Endothelial cell of umbilical vein (primary cell): ENCODE measurements at regions of chr1 and their contacts with region 1.

Region 1: GRCh38 chr1:174262349-174263241 is 103.3 kb downstream of the RABGAP1L start:
- DNase-seq: peak; percentile 68
- H3K4me3 ChIP-seq: no peak overlapping the region
- H3K27ac ChIP-seq: no peak overlapping the region
- H3K4me1 ChIP-seq: no peaks in the 10 kb centered on the region
- H3K27me3 ChIP-seq: no peaks in the 10 kb centered on the region
- CTCF ChIP-seq: peak; percentile 47 to 57
- POLR2A ChIP-seq: no peak

Region 2: GRCh38 chr1:174114788-174115448 is 147.7 kb before region 1 on chr1:
- CTCF ChIA-PET with region 1: no interaction called
- POLR2A ChIA-PET with region 1: no interaction called
- dilution Hi-C with region 1: no loop called
- intact Hi-C with region 1: no loop called
- DNase-seq: peak; percentile 48
- H3K4me3 ChIP-seq: no peak overlapping the region
- H3K27ac ChIP-seq: no peak overlapping the region
- H3K4me1 ChIP-seq: no peaks in the 10 kb centered on the region
- H3K27me3 ChIP-seq: peaks cover 0 to 5% of the 10 kb centered on the region in 2 experiments
- CTCF ChIP-seq: peak; percentile 56 to 73
- POLR2A ChIP-seq: no peak

Region 3: DNA sequence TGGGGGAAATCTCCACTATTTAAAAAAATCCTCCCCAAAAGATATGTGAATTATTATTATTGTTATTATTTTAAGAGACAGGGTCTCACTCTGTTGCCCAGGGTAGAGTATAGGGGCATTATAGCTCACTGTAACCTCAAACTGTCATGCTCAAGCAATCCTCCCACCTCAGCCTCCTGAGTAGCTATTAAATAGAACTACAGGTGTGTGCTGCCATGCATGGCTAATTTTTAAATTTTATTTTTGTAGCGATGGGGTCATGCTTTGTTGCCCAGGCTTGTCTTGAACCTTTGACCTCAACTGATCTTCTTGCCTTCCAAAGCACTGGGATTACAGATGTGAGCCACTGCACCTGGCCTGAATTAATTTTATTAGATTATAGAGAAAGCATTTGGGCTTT is 13.5 kb after region 1 on chr1:
- CTCF ChIA-PET with region 1: interaction called, 63 read pairs
- POLR2A ChIA-PET with region 1: no interaction called
- dilution Hi-C with region 1: no loop called
- intact Hi-C with region 1: no loop called
- DNase-seq: no peak
- H3K4me3 ChIP-seq: no peak overlapping the region
- H3K27ac ChIP-seq: no peak overlapping the region
- H3K4me1 ChIP-seq: no peaks in the 10 kb centered on the region
- H3K27me3 ChIP-seq: no peaks in the 10 kb centered on the region
- CTCF ChIP-seq: no peak
- POLR2A ChIP-seq: no peak

Region 4: GRCh38 chr1:174726167-174726879 is 463.7 kb after region 1 on chr1:
- CTCF ChIA-PET with region 1: interaction called, 378 read pairs
- POLR2A ChIA-PET with region 1: interaction called, 4 read pairs
- dilution Hi-C with region 1: loop called (anchors 10 kb)
- intact Hi-C with region 1: loop called (anchors 1 kb)
- DNase-seq: peak; percentile 25
- H3K4me3 ChIP-seq: no peak overlapping the region
- H3K27ac ChIP-seq: no peak overlapping the region
- H3K4me1 ChIP-seq: no peaks in the 10 kb centered on the region
- H3K27me3 ChIP-seq: no peaks in the 10 kb centered on the region
- CTCF ChIP-seq: peak in 1 of 2 donors; percentile 19
- POLR2A ChIP-seq: no peak

Region 5: GRCh38 chr1:174753131-174753530 is 490.5 kb after region 1 on chr1:
- CTCF ChIA-PET with region 1: interaction called, 279 read pairs
- POLR2A ChIA-PET with region 1: no interaction called
- dilution Hi-C with region 1: no loop called
- intact Hi-C with region 1: no loop called
- DNase-seq: no peak
- H3K4me3 ChIP-seq: no peak overlapping the region
- H3K27ac ChIP-seq: no peak overlapping the region
- H3K4me1 ChIP-seq: no peaks in the 10 kb centered on the region
- H3K27me3 ChIP-seq: no peaks in the 10 kb centered on the region
- CTCF ChIP-seq: no peak
- POLR2A ChIP-seq: no peak

Region 6: GRCh38 chr1:175124861-175125260 is 862.3 kb after region 1 on chr1:
- CTCF ChIA-PET with region 1: interaction called, 11 read pairs
- POLR2A ChIA-PET with region 1: no interaction called
- dilution Hi-C with region 1: no loop called
- intact Hi-C with region 1: no loop called
- DNase-seq: no peak
- H3K4me3 ChIP-seq: no peak overlapping the region
- H3K27ac ChIP-seq: no peak overlapping the region
- H3K4me1 ChIP-seq: no peaks in the 10 kb centered on the region
- H3K27me3 ChIP-seq: peaks cover 0 to 2% of the 10 kb centered on the region in 2 experiments
- CTCF ChIP-seq: no peak
- POLR2A ChIP-seq: no peak